Breast epithelium (tissue), 4 donors: ENCODE measurements at regions of chr18 and their contacts with region 1.

Region 1: DNA sequence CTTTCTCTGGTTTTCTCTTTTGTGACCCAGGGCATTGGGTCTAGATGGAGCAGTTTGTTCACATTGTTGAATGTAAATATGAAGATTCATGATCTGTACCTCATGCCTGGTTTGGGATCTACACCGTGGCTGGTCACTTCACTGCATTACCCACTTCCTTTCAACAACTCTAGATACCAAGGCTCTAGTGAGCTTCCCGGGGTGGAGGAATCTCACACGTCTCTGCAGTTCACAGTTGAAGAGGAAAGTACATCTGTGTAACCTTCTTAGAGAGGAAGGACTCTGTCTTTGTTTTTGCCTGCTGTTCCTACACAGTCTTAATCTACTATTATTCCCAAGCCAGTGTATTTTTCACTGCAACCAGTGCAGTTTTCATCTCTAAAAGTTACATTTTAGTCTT is 574.8 kb downstream of the MBD2 start:
- DNase-seq: no peak
- H3K4me3 ChIP-seq: no peak overlapping the region
- H3K27ac ChIP-seq: no peak overlapping the region
- H3K4me1 ChIP-seq: no peaks in the 10 kb centered on the region
- H3K27me3 ChIP-seq: no peaks in the 10 kb centered on the region
- CTCF ChIP-seq: no peak
- POLR2A ChIP-seq: no peak

Region 2: DNA sequence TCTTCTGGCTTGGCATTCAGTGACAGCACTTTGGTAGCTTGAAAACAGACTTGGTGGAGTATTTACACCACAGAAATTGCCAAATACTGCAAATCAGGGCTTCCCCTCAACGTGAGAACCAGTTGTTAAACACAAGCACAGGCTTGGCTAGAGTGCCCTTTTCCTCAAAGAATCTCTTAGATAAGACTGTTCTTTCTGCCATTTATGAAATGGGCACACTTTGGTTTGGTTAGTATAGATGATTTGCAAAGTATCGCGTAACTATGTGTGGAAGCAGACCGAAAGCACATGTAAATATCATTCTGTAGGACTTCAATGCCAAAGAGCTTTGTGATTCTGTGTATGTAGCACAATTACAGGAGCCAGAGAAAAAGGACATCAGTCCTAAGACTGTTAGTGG is 1001.4 kb before region 1 on chr18:
- intact Hi-C with region 1: no loop called
- DNase-seq: no peak
- H3K4me3 ChIP-seq: no peak overlapping the region
- H3K27ac ChIP-seq: no peak overlapping the region
- H3K4me1 ChIP-seq: no peaks in the 10 kb centered on the region
- H3K27me3 ChIP-seq: no peaks in the 10 kb centered on the region
- CTCF ChIP-seq: no peak
- POLR2A ChIP-seq: no peak

Region 3: DNA sequence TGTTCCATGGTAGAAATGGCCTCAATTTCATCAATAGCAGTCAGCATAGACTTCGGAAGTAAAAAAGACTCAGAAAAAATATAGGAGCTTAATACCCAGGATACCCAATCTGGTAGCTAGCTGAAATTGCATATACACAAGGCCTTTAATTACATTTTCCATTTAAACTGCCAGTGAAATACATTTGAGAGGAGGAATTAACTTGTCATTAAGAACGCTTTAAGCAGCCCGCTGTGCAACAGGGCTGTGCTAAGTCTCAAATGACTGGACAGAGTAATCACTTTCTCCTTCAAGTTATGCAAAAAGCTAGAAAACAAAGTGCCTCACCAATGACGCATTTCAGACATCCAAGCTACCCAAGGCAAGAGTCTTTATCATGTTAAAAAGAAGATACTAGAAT is 16.1 kb after region 1 on chr18:
- intact Hi-C with region 1: no loop called
- DNase-seq: no peak
- H3K4me3 ChIP-seq: no peak overlapping the region
- H3K27ac ChIP-seq: no peak overlapping the region
- H3K4me1 ChIP-seq: no peaks in the 10 kb centered on the region
- H3K27me3 ChIP-seq: no peaks in the 10 kb centered on the region
- CTCF ChIP-seq: no peak
- POLR2A ChIP-seq: no peak

Region 4: GRCh38 chr18:53682796-53683195 is 33.2 kb after region 1 on chr18:
- intact Hi-C with region 1: loop called (anchors 2 kb)
- DNase-seq: no peak
- H3K4me3 ChIP-seq: no peak overlapping the region
- H3K27ac ChIP-seq: no peak overlapping the region
- H3K4me1 ChIP-seq: no peaks in the 10 kb centered on the region
- H3K27me3 ChIP-seq: no peaks in the 10 kb centered on the region
- CTCF ChIP-seq: no peak
- POLR2A ChIP-seq: no peak